IMR-90 (cell line): ENCODE measurements at regions of chr9 and their contacts with region 1.

Region 1: DNA sequence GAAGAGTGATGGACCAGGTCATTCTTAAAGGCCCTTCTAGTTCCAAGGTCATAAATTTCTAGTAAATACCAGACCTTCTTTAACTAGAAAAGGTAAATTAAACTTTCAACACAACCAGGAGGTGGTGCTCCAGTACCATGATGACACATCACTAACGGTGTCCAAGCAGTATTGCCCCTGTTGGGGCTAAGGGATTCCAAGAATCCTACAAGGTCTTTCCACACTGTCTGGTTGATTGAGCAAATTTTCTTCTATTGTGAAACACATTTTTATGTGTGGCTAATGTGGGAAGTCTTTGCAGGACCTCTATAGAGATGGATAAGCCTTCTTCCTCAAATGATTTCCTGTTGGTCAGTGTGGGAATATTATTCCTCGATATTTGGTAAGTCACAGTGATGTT is 459.6 kb upstream of the PAPPA start:
- DNase-seq: peak; percentile 93
- ATAC-seq: peak; percentile 69
- H3K4me3 ChIP-seq: no peak overlapping the region
- H3K27ac ChIP-seq: no peak overlapping the region
- H3K4me1 ChIP-seq: peaks cover 13% of the 10 kb centered on the region
- H3K27me3 ChIP-seq: no peaks in the 10 kb centered on the region
- CTCF ChIP-seq: peak; percentile 79
- POLR2A ChIP-seq: no peak
- RAD21 ChIP-seq: peak; percentile 86

Region 2: DNA sequence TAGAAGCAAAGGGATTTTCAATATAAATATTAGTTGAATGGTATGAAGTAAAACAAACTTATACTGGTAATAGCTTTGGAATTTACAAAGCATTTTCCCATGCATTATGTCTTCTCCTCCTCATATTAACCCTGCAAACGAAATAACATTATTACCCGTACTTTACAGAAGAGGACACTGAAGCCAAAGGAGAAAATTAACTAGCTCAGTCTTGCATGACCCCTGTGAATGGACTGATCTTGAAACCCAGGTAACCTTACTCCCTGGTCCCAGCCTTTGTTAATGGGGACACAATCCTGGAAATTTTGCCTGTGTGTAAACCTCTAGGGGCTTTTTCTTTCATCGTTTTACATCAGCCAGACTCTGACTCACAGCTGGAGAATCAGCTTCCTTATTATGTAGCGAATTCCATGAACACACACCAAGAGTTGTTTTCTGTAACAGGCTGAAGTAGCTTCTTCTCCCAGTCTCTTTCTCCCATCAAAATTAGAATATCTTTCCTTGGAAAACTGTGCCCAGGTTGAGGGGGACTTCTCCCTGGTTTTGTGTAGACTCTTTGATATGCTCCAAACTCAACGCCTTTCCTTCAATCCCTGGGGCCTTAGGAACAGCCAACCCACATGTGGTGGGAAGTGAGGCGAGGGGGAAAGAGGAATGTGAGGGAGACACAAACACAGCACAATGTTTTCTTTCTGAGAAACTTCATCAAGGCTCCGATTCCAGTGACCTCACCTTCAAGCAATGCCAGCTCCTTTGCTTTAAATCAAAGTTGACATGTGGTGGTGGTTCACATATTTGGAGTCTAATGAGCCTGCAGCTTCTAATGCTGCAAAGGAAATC is 21.3 kb before region 1 on chr9:
- CTCF ChIA-PET with region 1: no interaction called
- POLR2A ChIA-PET with region 1: no interaction called
- dilution Hi-C with region 1: no loop called
- in situ Hi-C with region 1: no loop called
- intact Hi-C with region 1: loop called (anchors 1 kb)
- DNase-seq: peak; percentile 99
- ATAC-seq: peak; percentile 74
- H3K4me3 ChIP-seq: peak overlapping the region; percentile 10; the same call in 1 of the 2 replicates
- H3K27ac ChIP-seq: peak overlapping the region; percentile 99
- H3K4me1 ChIP-seq: peaks cover 35% of the 10 kb centered on the region
- H3K27me3 ChIP-seq: no peaks in the 10 kb centered on the region
- CTCF ChIP-seq: no peak
- POLR2A ChIP-seq: peak; percentile 73
- RAD21 ChIP-seq: peak; percentile 32; the same call in 1 of the 2 replicates

Region 3: DNA sequence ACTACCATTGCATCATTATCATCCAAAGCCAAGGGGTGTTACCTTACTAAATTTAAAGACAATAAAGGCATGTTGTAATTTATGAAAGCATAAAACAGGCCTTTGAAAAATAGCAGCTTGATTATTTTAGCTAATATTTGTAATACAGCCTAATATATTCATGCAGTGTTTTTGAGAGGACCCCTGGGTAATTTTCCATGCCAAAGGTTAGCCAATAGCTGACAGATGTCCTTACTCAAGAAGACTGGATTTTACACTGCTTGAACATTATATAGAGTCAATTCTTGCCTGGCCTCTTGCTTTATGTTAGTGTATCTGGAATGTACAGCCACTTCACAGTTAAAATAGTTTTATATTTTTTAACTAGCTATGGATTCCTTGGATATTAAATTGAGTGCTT is 121.8 kb after region 1 on chr9:
- CTCF ChIA-PET with region 1: no interaction called
- POLR2A ChIA-PET with region 1: no interaction called
- dilution Hi-C with region 1: no loop called
- in situ Hi-C with region 1: no loop called
- intact Hi-C with region 1: no loop called
- DNase-seq: no peak
- ATAC-seq: no peak
- H3K4me3 ChIP-seq: no peak overlapping the region
- H3K27ac ChIP-seq: no peak overlapping the region
- H3K4me1 ChIP-seq: no peaks in the 10 kb centered on the region
- H3K27me3 ChIP-seq: no peaks in the 10 kb centered on the region
- CTCF ChIP-seq: no peak
- POLR2A ChIP-seq: no peak
- RAD21 ChIP-seq: no peak

Region 4: DNA sequence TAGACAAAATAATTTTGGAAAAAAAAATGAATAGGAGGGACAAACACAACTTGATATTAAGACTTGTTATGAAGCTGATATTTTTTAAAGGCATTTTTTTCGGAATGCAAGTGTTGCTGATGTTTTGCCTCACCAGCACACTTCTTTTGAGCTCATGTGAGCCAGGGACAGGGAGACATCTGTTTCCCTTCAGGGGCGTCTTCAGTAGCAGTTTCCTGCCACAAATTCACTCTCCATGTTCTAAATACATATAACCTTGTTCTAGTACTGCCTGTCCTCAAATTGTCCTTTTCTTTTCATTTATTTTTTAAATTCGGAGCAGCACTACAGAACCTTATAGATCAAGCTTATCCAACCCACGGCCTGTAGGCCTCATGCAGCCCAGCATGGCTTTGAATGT is 143.6 kb after region 1 on chr9:
- CTCF ChIA-PET with region 1: no interaction called
- POLR2A ChIA-PET with region 1: no interaction called
- dilution Hi-C with region 1: no loop called
- in situ Hi-C with region 1: no loop called
- intact Hi-C with region 1: no loop called
- DNase-seq: no peak
- ATAC-seq: no peak
- H3K4me3 ChIP-seq: no peak overlapping the region
- H3K27ac ChIP-seq: no peak overlapping the region
- H3K4me1 ChIP-seq: no peaks in the 10 kb centered on the region
- H3K27me3 ChIP-seq: no peaks in the 10 kb centered on the region
- CTCF ChIP-seq: no peak
- POLR2A ChIP-seq: no peak
- RAD21 ChIP-seq: no peak

Region 5: GRCh38 chr9:116156621-116157314 is 462.8 kb after region 1 on chr9:
- CTCF ChIA-PET with region 1: no interaction called
- POLR2A ChIA-PET with region 1: no interaction called
- dilution Hi-C with region 1: no loop called
- in situ Hi-C with region 1: loop called (anchors 10 kb)
- intact Hi-C with region 1: loop called (anchors 1 kb)
- DNase-seq: peak; percentile 78
- ATAC-seq: peak; percentile 25
- H3K4me3 ChIP-seq: peak overlapping the region; percentile 46
- H3K27ac ChIP-seq: peak overlapping the region; percentile 76
- H3K4me1 ChIP-seq: peaks cover 12% of the 10 kb centered on the region
- H3K27me3 ChIP-seq: no peaks in the 10 kb centered on the region
- CTCF ChIP-seq: no peak
- POLR2A ChIP-seq: no peak
- RAD21 ChIP-seq: no peak

Region 6: DNA sequence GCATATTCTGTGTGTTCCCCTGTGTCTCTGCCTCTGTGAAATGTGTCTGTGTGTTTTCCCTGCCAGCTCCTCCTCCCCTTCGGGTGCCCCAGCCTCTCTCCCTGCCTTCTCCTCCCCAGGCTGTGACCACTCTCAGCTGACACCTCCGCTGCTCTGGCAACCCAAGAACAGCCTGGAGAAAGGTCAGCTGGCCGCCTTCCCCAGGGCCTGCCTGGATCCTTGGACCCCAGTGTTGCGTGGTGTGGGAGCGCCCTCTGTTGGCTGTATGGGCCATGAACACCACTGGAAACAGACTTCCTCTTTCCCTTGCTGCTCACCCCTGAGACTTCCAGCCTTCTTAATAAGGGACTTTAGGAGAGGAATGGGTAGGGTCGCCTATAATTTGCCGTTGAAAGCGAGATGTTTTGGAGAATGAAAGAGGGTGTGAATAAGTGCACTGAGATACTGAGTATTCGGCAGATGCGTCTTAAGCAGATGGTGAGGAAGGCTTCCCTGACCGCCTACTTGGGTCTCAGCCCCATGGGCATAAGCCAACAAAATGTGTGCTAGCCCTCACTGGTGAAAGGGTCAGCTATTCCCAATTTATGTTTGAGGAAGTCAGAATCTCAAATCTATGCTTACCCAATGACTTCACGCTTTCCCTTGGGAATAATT is 878.2 kb after region 1 on chr9:
- CTCF ChIA-PET with region 1: interaction called, 4 read pairs
- POLR2A ChIA-PET with region 1: no interaction called
- dilution Hi-C with region 1: no loop called
- in situ Hi-C with region 1: loop called (anchors 5 kb)
- intact Hi-C with region 1: loop called (anchors 2 kb)
- DNase-seq: peak; percentile 84
- ATAC-seq: peak; percentile 95
- H3K4me3 ChIP-seq: no peak overlapping the region
- H3K27ac ChIP-seq: no peak overlapping the region
- H3K4me1 ChIP-seq: peaks cover 5% of the 10 kb centered on the region; the same call in 1 of the 2 replicates
- H3K27me3 ChIP-seq: no peaks in the 10 kb centered on the region
- CTCF ChIP-seq: peak; percentile 94
- POLR2A ChIP-seq: peak; percentile 59; the same call in 1 of the 2 replicates
- RAD21 ChIP-seq: peak; percentile 99